CD4-positive, alpha-beta memory T cell (primary cell): ENCODE measurements at regions of chr22 and their contacts with region 1.

Region 1: GRCh38 chr22:45863981-45864751 is 112.8 kb downstream of the WNT7B start:
- DNase-seq: peak; percentile 49 to 53 (median 50)
- H3K4me3 ChIP-seq: no peak overlapping the region
- H3K4me3 Mint-ChIP-seq: no peak overlapping the region
- H3K27ac ChIP-seq: no peak overlapping the region
- H3K27ac Mint-ChIP-seq: peak overlapping the region in 4 of 7 donors; percentile 5 to 77 (median 30)
- H3K4me1 ChIP-seq: peaks cover 9% of the 10 kb centered on the region
- H3K4me1 Mint-ChIP-seq: peaks cover 2 to 22% (median 8%) of the 10 kb centered on the region in 4 donors
- H3K27me3 ChIP-seq: peaks cover 8% of the 10 kb centered on the region
- H3K27me3 Mint-ChIP-seq: peaks cover 23 to 24% of the 10 kb centered on the region in 2 donors

Region 2: GRCh38 chr22:45785458-45785857 is 78.7 kb before region 1 on chr22:
- CTCF ChIA-PET with region 1: no interaction called
- POLR2A ChIA-PET with region 1: no interaction called
- intact Hi-C with region 1: no loop called
- DNase-seq: no peak
- H3K4me3 ChIP-seq: no peak overlapping the region
- H3K4me3 Mint-ChIP-seq: no peak overlapping the region
- H3K27ac ChIP-seq: no peak overlapping the region
- H3K27ac Mint-ChIP-seq: no peak overlapping the region
- H3K4me1 ChIP-seq: no peaks in the 10 kb centered on the region
- H3K4me1 Mint-ChIP-seq: peaks cover 0 to 5% (median under 1%) of the 10 kb centered on the region in 4 donors
- H3K27me3 ChIP-seq: no peaks in the 10 kb centered on the region
- H3K27me3 Mint-ChIP-seq: no peaks in the 10 kb centered on the region

Region 3: GRCh38 chr22:45852826-45853225 is 11.3 kb before region 1 on chr22:
- CTCF ChIA-PET with region 1: interaction called, 12 read pairs
- POLR2A ChIA-PET with region 1: interaction called, 3 read pairs
- intact Hi-C with region 1: no loop called
- DNase-seq: no peak
- H3K4me3 ChIP-seq: no peak overlapping the region
- H3K4me3 Mint-ChIP-seq: no peak overlapping the region
- H3K27ac ChIP-seq: no peak overlapping the region
- H3K27ac Mint-ChIP-seq: no peak overlapping the region
- H3K4me1 ChIP-seq: no peaks in the 10 kb centered on the region
- H3K4me1 Mint-ChIP-seq: peaks cover 0 to 4% (median 0%) of the 10 kb centered on the region in 4 donors
- H3K27me3 ChIP-seq: no peaks in the 10 kb centered on the region
- H3K27me3 Mint-ChIP-seq: no peaks in the 10 kb centered on the region

Region 4: DNA sequence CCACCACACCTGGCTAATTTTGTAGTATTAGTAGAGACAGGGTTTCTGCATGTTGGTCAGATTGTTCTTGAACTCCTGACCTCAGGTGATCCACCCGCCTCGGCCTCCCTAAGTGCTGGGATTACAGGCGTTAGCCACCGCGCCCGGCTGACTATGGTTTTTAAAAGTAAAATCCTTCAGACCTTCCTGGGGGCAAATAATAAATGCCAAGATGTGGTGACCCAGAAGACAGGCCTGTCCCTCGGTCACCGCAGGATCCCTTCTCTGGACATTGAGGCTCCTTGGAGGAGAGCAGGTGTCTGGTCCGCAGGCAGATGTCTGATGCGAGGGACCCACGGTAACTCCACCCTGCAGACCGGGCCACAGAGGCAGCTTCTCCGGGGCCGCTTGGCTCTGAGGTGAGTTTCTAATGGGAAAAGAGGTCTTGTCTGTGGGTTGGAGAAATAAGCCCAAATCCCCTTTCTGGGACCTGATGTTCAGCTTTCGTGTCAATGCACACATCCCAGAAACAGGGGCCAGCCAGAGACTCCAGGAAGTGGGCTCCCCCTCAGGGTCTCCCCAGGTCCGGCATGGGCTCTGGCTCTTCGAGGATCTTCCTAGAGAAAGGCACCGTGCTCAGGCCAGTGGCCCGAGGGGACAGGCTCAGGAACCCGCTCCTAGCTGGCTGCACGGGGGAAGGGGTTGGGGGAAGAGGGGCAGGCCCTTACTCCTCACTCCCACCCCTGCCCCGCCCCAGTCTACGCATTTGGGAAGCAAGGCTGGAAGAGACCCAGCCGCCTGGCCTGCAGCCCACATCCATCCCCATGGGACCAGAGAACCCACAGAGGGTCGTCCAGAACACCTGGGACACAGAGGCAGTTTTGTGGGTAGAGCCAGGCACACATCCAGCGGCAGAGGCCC is 12.2 kb after region 1 on chr22:
- CTCF ChIA-PET with region 1: interaction called, 23 read pairs
- POLR2A ChIA-PET with region 1: no interaction called
- intact Hi-C with region 1: no loop called
- DNase-seq: no peak
- H3K4me3 ChIP-seq: no peak overlapping the region
- H3K4me3 Mint-ChIP-seq: no peak overlapping the region
- H3K27ac ChIP-seq: no peak overlapping the region
- H3K27ac Mint-ChIP-seq: no peak overlapping the region
- H3K4me1 ChIP-seq: no peaks in the 10 kb centered on the region
- H3K4me1 Mint-ChIP-seq: no peaks in the 10 kb centered on the region
- H3K27me3 ChIP-seq: no peaks in the 10 kb centered on the region
- H3K27me3 Mint-ChIP-seq: peaks cover 19 to 20% of the 10 kb centered on the region in 2 donors

Region 5: DNA sequence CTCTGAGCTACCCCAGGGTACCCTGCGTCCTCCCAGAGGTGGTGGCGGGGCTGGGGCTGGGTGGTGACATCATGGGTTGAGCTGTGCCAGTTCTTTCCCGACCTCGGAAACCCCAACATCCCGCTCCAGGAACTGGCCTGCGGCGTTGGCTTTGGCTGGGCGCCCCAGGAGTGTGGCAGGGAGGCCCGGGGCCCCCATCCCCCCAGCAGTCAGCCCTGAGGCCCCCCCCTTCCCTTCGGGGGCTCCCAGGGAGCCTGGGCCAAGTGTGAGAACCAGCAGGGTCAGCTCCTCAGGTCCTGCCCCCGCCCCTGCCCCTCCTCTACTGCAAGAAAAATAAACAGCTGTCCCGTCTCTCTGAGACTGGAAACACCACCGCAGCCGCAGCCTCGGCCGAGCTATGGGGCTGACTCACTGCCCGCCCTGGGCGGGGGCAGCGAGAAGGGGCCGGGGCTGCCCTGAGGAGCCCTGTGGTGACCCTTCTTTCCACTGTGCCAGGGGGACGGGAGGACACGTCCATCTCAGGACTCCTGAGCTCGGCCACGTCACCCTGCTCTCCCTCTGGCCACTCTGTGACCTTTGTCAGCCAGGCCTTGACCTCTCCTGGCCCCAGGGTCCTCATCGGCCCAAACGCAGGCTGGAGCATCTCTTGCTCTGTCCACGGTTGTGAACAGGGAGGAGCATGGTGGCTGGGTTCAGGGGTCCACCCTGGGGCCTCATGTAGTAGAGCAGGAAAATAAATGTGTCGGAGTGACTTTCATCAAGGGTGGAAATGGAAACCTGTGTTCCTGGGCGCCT is 39.4 kb after region 1 on chr22:
- CTCF ChIA-PET with region 1: no interaction called
- POLR2A ChIA-PET with region 1: no interaction called
- intact Hi-C with region 1: no loop called
- DNase-seq: no peak
- H3K4me3 ChIP-seq: no peak overlapping the region
- H3K4me3 Mint-ChIP-seq: no peak overlapping the region
- H3K27ac ChIP-seq: no peak overlapping the region
- H3K27ac Mint-ChIP-seq: no peak overlapping the region
- H3K4me1 ChIP-seq: no peaks in the 10 kb centered on the region
- H3K4me1 Mint-ChIP-seq: no peaks in the 10 kb centered on the region
- H3K27me3 ChIP-seq: no peaks in the 10 kb centered on the region
- H3K27me3 Mint-ChIP-seq: peaks cover 10 to 12% of the 10 kb centered on the region in 2 donors